Activated T-helper 1 cell treated with anti-CD3 and anti-CD28 coated beads, Interleukin-12 subunit alpha, Interleukin-12 subunit beta, Interleukin-2, Interleukin-4 antibody, amounts not matched to agents 30 ng/mL and 10 ng/mL and 1 ng/mL, durations not matched to agents 14 hours and 24 hours and 36 hours (primary cell): ENCODE measurements at regions of chr18 and their contacts with region 1.

Region 1: DNA sequence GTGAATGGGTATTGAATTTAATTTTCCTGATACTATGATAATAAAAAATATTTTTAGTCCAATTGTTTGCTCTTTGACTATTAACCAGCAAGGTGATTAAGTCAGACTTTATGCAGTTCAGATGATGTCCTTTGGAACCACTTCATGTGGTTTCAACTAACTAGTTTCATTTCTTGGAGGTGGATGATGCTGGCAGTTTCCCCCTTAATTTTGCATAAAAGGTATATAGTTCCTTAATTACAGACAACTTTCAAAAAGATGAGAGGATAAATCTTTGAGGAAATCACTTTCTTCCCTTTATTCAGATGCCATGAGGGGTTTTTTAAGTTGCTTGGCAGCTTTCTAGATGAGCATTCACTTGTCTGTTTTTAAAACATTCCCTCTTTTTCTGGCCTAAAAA is 223.1 kb downstream of the PHLPP1 start:
- DNase-seq: no peak
- H3K4me3 Mint-ChIP-seq: no peak overlapping the region
- H3K27ac Mint-ChIP-seq: no peak overlapping the region
- H3K4me1 Mint-ChIP-seq: peaks cover 24% of the 10 kb centered on the region
- H3K27me3 Mint-ChIP-seq: no peaks in the 10 kb centered on the region

Region 2: DNA sequence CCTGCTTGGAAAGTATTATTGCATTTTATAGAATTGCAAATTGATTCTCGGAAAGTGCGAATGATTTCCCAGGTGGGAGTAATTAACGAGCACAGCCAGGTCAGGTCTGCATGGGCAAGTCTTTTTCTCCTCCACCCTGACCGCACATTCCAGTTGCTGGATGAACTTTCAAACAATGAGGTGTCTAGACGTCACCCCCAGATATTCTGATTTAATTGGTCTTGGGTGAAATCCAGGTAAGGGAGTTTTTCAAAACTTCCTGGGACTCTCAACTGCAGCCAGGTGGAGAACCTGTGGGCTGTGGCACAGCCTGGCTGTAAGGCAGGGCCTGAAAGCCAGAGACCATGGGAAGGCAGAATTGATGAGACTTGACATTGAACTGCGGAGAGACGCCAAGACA is 1029.8 kb before region 1 on chr18:
- intact Hi-C with region 1: no loop called
- DNase-seq: no peak
- H3K4me3 Mint-ChIP-seq: no peak overlapping the region
- H3K27ac Mint-ChIP-seq: no peak overlapping the region
- H3K4me1 Mint-ChIP-seq: no peaks in the 10 kb centered on the region
- H3K27me3 Mint-ChIP-seq: peaks cover 39% of the 10 kb centered on the region

Region 3: DNA sequence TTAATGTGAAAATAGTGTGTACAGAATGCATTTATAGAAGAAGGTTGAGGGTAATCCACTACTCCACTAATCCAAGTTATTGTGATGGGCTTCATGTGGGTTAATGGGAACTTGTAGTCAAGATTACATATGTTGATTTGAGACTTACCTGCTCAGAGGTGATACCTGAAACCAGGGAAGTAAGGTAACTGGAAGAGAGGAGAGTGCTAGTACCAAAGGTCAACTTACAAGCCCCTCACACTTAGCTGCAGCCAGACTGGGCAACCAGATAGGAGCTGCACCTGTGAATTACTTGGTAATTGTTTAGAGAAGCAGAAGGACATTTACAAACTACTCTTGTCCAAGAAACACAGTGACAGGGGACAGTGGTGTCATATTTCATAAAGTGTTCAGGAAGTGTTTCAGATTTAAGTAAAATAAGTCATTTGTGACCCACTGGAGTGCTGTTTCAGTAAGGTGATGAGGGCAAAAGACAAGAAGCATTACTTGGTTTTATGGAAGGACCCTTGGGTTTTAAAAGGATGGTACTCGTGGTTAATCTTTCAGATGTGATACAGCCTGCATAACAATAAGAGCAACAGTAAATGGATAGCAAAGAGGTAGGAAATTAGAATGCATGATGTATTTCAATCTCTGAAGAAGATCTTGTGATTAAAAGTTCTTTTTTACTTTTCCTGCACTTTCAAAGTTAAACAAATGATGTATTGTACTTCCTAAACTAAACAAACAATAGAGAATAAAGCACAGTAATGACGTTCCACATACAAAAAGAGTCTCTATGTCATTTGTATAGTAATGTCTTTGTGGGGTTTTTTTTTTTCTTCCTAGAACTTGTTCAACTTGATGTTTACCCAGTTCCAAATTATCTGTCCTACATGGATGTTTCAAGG is 33.8 kb before region 1 on chr18:
- intact Hi-C with region 1: loop called (anchors 5 kb)
- DNase-seq: no peak
- H3K4me3 Mint-ChIP-seq: no peak overlapping the region
- H3K27ac Mint-ChIP-seq: no peak overlapping the region
- H3K4me1 Mint-ChIP-seq: no peaks in the 10 kb centered on the region
- H3K27me3 Mint-ChIP-seq: no peaks in the 10 kb centered on the region